HCT116 (cell line): ENCODE measurements at regions of chr12 and their contacts with region 1.

Region 1: GRCh38 chr12:43863770-43864366 is 28.0 kb downstream of the TMEM117 start:
- DNase-seq: no peak
- ATAC-seq: no peak
- H3K4me3 ChIP-seq: no peak overlapping the region
- H3K27ac ChIP-seq: no peak overlapping the region
- H3K4me1 ChIP-seq: no peaks in the 10 kb centered on the region
- H3K27me3 ChIP-seq: no peaks in the 10 kb centered on the region
- CTCF ChIP-seq: no peak
- POLR2A ChIP-seq: no peak
- RAD21 ChIP-seq: no peak

Region 2: GRCh38 chr12:43789941-43790340 is 73.9 kb before region 1 on chr12:
- CTCF ChIA-PET with region 1: no interaction called
- POLR2A ChIA-PET with region 1: no interaction called
- RAD21 ChIA-PET with region 1: interaction called in 1 of 2 experiments, 12 read pairs
- intact Hi-C with region 1: no loop called
- DNase-seq: no peak
- ATAC-seq: no peak
- H3K4me3 ChIP-seq: no peak overlapping the region
- H3K27ac ChIP-seq: no peak overlapping the region
- H3K4me1 ChIP-seq: no peaks in the 10 kb centered on the region
- H3K27me3 ChIP-seq: no peaks in the 10 kb centered on the region
- CTCF ChIP-seq: no peak
- POLR2A ChIP-seq: no peak
- RAD21 ChIP-seq: no peak

Region 3: GRCh38 chr12:43841253-43841652 is 22.6 kb before region 1 on chr12:
- CTCF ChIA-PET with region 1: no interaction called
- POLR2A ChIA-PET with region 1: no interaction called
- RAD21 ChIA-PET with region 1: no interaction called
- intact Hi-C with region 1: no loop called
- DNase-seq: no peak
- ATAC-seq: no peak
- H3K4me3 ChIP-seq: no peak overlapping the region
- H3K27ac ChIP-seq: no peak overlapping the region
- H3K4me1 ChIP-seq: peaks cover 0 to 7% of the 10 kb centered on the region in 2 experiments; a peak in 1 of 4 replicates
- H3K27me3 ChIP-seq: no peaks in the 10 kb centered on the region
- CTCF ChIP-seq: no peak
- POLR2A ChIP-seq: no peak
- RAD21 ChIP-seq: no peak